Caco-2 (cell line): ENCODE measurements at regions of chr1 and their contacts with region 1.

Region 1: GRCh38 chr1:41573785-41574713 is 89.6 kb upstream of the EDN2 start:
- DNase-seq: peak; percentile 68 to 69
- H3K4me3 ChIP-seq: no peak overlapping the region
- H3K4me3 Mint-ChIP-seq: no peak overlapping the region
- H3K27ac Mint-ChIP-seq: no peak overlapping the region
- H3K4me1 ChIP-seq: no peaks in the 10 kb centered on the region
- H3K4me1 Mint-ChIP-seq: no peaks in the 10 kb centered on the region
- H3K27me3 ChIP-seq: no peaks in the 10 kb centered on the region
- H3K27me3 Mint-ChIP-seq: peaks cover 13% of the 10 kb centered on the region
- CTCF ChIP-seq: peak; percentile 52 to 75

Region 2: GRCh38 chr1:41622859-41623723 is 49.0 kb after region 1 on chr1:
- CTCF ChIA-PET with region 1: no interaction called
- POLR2A ChIA-PET with region 1: no interaction called
- intact Hi-C with region 1: no loop called
- DNase-seq: no peak
- H3K4me3 ChIP-seq: no peak overlapping the region
- H3K4me3 Mint-ChIP-seq: peak overlapping the region; percentile 53
- H3K27ac Mint-ChIP-seq: peak overlapping the region; percentile 80
- H3K4me1 ChIP-seq: peaks cover 18% of the 10 kb centered on the region
- H3K4me1 Mint-ChIP-seq: peaks cover 18% of the 10 kb centered on the region
- H3K27me3 ChIP-seq: no peaks in the 10 kb centered on the region
- H3K27me3 Mint-ChIP-seq: no peaks in the 10 kb centered on the region
- CTCF ChIP-seq: no peak

Region 3: GRCh38 chr1:41795205-41795762 is 221.2 kb after region 1 on chr1:
- CTCF ChIA-PET with region 1: no interaction called
- POLR2A ChIA-PET with region 1: no interaction called
- intact Hi-C with region 1: loop called (anchors 1 kb)
- DNase-seq: no peak
- H3K4me3 ChIP-seq: no peak overlapping the region
- H3K4me3 Mint-ChIP-seq: no peak overlapping the region
- H3K27ac Mint-ChIP-seq: no peak overlapping the region
- H3K4me1 ChIP-seq: no peaks in the 10 kb centered on the region
- H3K4me1 Mint-ChIP-seq: no peaks in the 10 kb centered on the region
- H3K27me3 ChIP-seq: no peaks in the 10 kb centered on the region
- H3K27me3 Mint-ChIP-seq: peaks cover 8% of the 10 kb centered on the region
- CTCF ChIP-seq: peak in 1 of 2 experiments; percentile 15

Region 4: GRCh38 chr1:42003443-42003842 is 429.4 kb after region 1 on chr1:
- CTCF ChIA-PET with region 1: no interaction called
- POLR2A ChIA-PET with region 1: no interaction called
- intact Hi-C with region 1: loop called (anchors 10 kb)
- DNase-seq: no peak
- H3K4me3 ChIP-seq: no peak overlapping the region
- H3K4me3 Mint-ChIP-seq: no peak overlapping the region
- H3K27ac Mint-ChIP-seq: no peak overlapping the region
- H3K4me1 ChIP-seq: no peaks in the 10 kb centered on the region
- H3K4me1 Mint-ChIP-seq: no peaks in the 10 kb centered on the region
- H3K27me3 ChIP-seq: no peaks in the 10 kb centered on the region
- H3K27me3 Mint-ChIP-seq: peaks cover 5% of the 10 kb centered on the region
- CTCF ChIP-seq: no peak